ENCODE measurements at regions of chr12 and their contacts with region 1.

Region 1: DNA sequence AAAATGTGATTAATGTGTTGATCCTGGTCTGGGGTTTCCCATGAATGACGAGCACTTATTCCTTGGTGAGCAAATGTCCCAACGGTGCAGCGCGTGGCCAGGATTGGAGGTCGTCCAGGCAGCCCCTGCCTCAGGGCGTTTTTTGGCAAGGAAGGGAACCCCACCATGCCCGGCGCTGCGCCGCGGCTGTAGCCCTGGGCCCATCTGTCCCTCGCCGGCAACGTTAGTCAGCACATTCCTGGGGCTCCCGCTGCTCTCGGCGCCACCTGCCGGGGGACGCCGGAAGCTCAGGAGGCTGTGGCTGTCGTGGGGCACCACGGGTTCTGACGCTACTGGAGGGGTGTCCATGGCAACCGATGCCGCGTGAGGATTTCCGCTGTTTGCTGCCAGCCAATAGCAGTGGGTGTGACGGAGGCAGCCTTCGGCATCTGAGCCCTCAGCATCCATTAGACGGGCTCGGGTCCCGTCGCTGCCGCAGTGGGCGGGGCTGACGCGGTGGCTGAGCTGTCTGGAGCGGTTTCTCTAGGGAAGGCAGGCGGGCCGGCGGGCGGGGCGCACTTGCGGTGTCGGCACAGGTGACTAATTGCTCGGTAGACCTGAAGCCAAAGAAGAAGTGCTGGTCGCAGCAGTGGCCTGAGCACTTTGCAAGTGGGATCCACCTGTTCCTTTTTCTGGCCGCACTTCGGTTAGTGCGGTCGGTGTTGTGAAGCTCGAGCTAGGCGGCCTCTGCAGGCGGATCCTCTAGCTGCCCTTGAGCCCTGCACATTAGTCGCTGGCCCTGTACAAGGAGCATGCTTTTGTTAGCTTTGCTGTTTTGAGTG is 29.5 kb downstream of the RAB35 start:
- DNase-seq: peak; percentile 99
- H3K4me3 ChIP-seq: peak overlapping the region; percentile 13 to 49 (median 42)
- H3K27ac ChIP-seq: peak overlapping the region; percentile 66 to 82 (median 70)
- H3K4me1 ChIP-seq: peaks cover 0 to 14% (median 13%) of the 10 kb centered on the region in 4 donors
- H3K27me3 ChIP-seq: no peaks in the 10 kb centered on the region
- CTCF ChIP-seq: peak; percentile 92 to 97 (median 96)
- EP300 ChIP-seq: peak in 2 of 4 donors; percentile 63 to 94
- POLR2A ChIP-seq: no peak

Region 2: GRCh38 chr12:119988782-119989668 is 98.0 kb before region 1 on chr12 and contains the start of gene BICDL1:
- intact Hi-C with region 1: loop called (anchors 2 kb)
- DNase-seq: no peak
- H3K4me3 ChIP-seq: peak within 1 kb of the TSS; percentile 10 to 59 (median 50)
- H3K27ac ChIP-seq: peak within 1 kb of the TSS in 3 of 4 donors; percentile 25 to 49 (median 42)
- H3K4me1 ChIP-seq: peaks cover 0 to 19% (median 16%) of the 10 kb centered on the region in 4 donors
- H3K27me3 ChIP-seq: peaks cover 3 to 20% (median 3%) of the 10 kb centered on the region in 3 donors
- CTCF ChIP-seq: no peak
- EP300 ChIP-seq: no peak
- POLR2A ChIP-seq: no peak
- total RNA-seq, gene BICDL1: 0.16 to 1.4 (median 0.55) TPM

Region 3: DNA sequence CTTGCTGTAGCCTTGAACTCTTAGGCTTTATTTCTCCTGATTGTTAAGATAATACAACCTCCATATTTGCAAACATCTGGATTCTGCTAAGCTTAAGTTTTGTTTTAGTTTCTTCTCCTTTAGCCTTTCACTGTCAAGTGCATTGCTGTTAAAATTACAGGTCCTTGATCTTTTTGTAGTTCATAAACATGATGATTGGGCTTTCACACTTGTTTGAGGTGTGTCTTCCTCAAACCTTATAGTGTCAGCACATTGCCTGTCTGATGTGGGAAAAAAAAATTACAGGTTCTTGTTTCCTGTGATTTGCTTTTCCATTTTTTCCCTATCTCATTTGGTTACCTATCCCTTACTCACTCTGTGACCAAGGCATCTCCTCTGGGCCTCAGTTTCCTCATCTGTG is 38.7 kb before region 1 on chr12:
- intact Hi-C with region 1: no loop called
- DNase-seq: no peak
- H3K4me3 ChIP-seq: no peak overlapping the region
- H3K27ac ChIP-seq: no peak overlapping the region
- H3K4me1 ChIP-seq: no peaks in the 10 kb centered on the region
- H3K27me3 ChIP-seq: no peaks in the 10 kb centered on the region
- CTCF ChIP-seq: no peak
- EP300 ChIP-seq: no peak
- POLR2A ChIP-seq: no peak

Region 4: DNA sequence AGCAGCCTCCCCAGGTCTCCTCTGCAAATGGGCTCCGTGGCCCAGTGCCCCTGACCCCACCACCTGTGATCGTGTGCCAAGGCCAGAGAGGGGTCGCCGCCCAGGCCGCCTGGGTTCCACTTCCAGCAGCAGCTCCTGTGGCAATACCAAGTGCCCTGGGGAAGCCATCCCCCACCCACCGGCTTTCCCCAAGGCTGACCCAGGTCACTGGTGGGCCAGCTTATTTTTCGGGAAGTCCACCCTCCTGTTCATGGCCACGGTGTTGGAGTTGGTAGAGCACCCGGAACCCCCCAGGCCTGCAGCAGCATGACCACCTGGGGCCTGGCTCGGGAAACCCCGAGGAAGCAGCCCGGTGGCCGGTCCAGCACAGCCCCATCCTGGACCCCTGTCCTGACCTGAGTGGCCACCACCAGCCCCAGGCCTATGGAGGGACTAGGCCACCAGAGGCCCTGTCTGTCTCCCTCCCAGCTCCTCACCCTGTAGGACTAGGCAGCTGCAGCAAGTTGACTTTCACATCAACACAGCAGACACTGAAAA is 992.8 kb after region 1 on chr12:
- intact Hi-C with region 1: no loop called
- DNase-seq: no peak
- H3K4me3 ChIP-seq: no peak overlapping the region
- H3K27ac ChIP-seq: no peak overlapping the region
- H3K4me1 ChIP-seq: no peaks in the 10 kb centered on the region
- H3K27me3 ChIP-seq: no peaks in the 10 kb centered on the region
- CTCF ChIP-seq: no peak
- EP300 ChIP-seq: no peak
- POLR2A ChIP-seq: no peak

Measured in sigmoid colon (tissue), 7 donors.